ENCODE measurements at regions of chr12 and their contacts with region 1.

Region 1: GRCh38 chr12:93397412-93397811 is 19.7 kb downstream of the NUDT4 start:
- DNase-seq: peak; percentile 51
- H3K4me3 Mint-ChIP-seq: no peak overlapping the region
- H3K27ac Mint-ChIP-seq: no peak overlapping the region
- H3K4me1 Mint-ChIP-seq: peaks cover 3% of the 10 kb centered on the region
- H3K27me3 Mint-ChIP-seq: no peaks in the 10 kb centered on the region

Region 2: GRCh38 chr12:92784795-92785562 is 612.4 kb before region 1 on chr12:
- intact Hi-C with region 1: loop called (anchors 2 kb)
- DNase-seq: peak; percentile 82
- H3K4me3 Mint-ChIP-seq: no peak overlapping the region
- H3K27ac Mint-ChIP-seq: no peak overlapping the region
- H3K4me1 Mint-ChIP-seq: peaks cover 11% of the 10 kb centered on the region
- H3K27me3 Mint-ChIP-seq: no peaks in the 10 kb centered on the region

Region 3: GRCh38 chr12:93025145-93025805 is 372.1 kb before region 1 on chr12:
- intact Hi-C with region 1: loop called (anchors 5 kb)
- DNase-seq: peak; percentile 62
- H3K4me3 Mint-ChIP-seq: no peak overlapping the region
- H3K27ac Mint-ChIP-seq: no peak overlapping the region
- H3K4me1 Mint-ChIP-seq: no peaks in the 10 kb centered on the region
- H3K27me3 Mint-ChIP-seq: peaks cover 9% of the 10 kb centered on the region

Region 4: GRCh38 chr12:93109551-93110203 is 287.7 kb before region 1 on chr12:
- intact Hi-C with region 1: no loop called
- DNase-seq: no peak
- H3K4me3 Mint-ChIP-seq: no peak overlapping the region
- H3K27ac Mint-ChIP-seq: peak overlapping the region; percentile 79
- H3K4me1 Mint-ChIP-seq: peaks cover 3% of the 10 kb centered on the region
- H3K27me3 Mint-ChIP-seq: no peaks in the 10 kb centered on the region

Region 5: GRCh38 chr12:95339086-95339788 is 1941.8 kb after region 1 on chr12:
- intact Hi-C with region 1: no loop called
- DNase-seq: no peak
- H3K4me3 Mint-ChIP-seq: no peak overlapping the region
- H3K27ac Mint-ChIP-seq: no peak overlapping the region
- H3K4me1 Mint-ChIP-seq: peaks cover 6% of the 10 kb centered on the region
- H3K27me3 Mint-ChIP-seq: no peaks in the 10 kb centered on the region

Measured in activated CD4-positive, alpha-beta T cell treated with anti-CD3 and anti-CD28 coated beads, Interleukin-2, amount 10 ng/mL, durations not matched to agents 24 days and 14 days (primary cell).